Heart right ventricle (tissue), 16 donors: ENCODE measurements at regions of chr16 and their contacts with region 1.

Region 1: DNA sequence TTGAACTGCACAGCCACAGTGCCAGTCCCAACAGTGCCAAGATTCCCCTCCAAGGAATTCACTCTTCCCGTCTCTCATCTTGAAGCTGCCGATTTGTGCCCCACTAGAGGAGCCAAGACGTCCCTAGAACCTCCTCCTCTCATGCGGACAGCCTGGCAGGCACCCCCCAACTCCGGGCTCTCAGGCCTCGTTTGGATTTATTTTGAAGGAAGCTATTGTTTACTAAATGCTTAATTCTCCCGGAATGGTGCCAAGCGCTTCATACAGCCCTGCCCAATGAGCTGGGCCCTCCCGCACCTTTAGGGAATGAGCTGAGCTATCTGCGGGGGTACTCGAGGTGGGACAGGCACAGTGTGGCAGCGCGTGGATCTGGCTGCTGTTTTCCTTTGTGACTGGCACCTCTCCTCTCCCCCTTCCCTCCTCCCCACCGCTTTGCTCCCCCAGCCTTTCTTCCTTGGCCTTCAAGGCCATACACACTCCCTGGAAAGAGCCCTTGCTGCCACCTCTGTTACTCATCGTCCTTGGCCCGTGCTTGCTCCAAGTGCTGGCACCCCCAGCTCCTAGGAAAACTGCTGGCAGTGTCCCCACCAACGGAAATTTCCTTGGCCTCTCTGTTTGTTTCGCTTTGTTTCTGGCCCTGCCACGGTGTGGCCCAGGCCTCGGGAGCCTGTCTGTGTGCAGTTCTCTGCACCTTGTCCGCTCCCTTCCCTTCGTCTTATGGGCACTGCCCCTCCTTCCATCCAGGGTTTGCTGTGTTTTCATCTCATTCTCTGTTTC is 49.9 kb upstream of the CDR2 start:
- DNase-seq: peak in 1 of 2 donors; percentile 25
- ATAC-seq: peak; percentile 25 to 44 (median 34)
- H3K4me3 ChIP-seq: peak overlapping the region in 7 of 10 donors; percentile 2 to 34 (median 31)
- H3K27ac ChIP-seq: peak overlapping the region; percentile 2 to 79 (median 70)
- H3K4me1 ChIP-seq: peaks cover 0 to 19% (median 5%) of the 10 kb centered on the region in 9 donors
- H3K27me3 ChIP-seq: no peaks in the 10 kb centered on the region
- CTCF ChIP-seq: no peak

Region 2: GRCh38 chr16:21952793-21953540 is 471.4 kb before region 1 on chr16 and contains the start of gene UQCRC2:
- intact Hi-C with region 1: no loop called
- DNase-seq: peak; percentile 85 to 93
- ATAC-seq: peak; percentile 95 to 98 (median 97)
- H3K4me3 ChIP-seq: peak within 1 kb of the TSS; percentile 78 to 98 (median 88)
- H3K27ac ChIP-seq: peak within 1 kb of the TSS; percentile 86 to 99 (median 96)
- H3K4me1 ChIP-seq: peaks cover 3 to 70% (median 50%) of the 10 kb centered on the region in 9 donors
- H3K27me3 ChIP-seq: no peaks in the 10 kb centered on the region
- CTCF ChIP-seq: no peak
- total RNA-seq, gene UQCRC2: 648 to 1,183 (median 997) TPM

Region 3: GRCh38 chr16:22374311-22375116 is 49.8 kb before region 1 on chr16 and contains the start of gene CDR2:
- intact Hi-C with region 1: loop called in 1 of 10 experiments (anchors 10 kb)
- DNase-seq: peak; percentile 98 to 99
- ATAC-seq: peak; percentile 96 to 99 (median 97)
- H3K4me3 ChIP-seq: peak within 1 kb of the TSS; percentile 83 to 97 (median 95)
- H3K27ac ChIP-seq: peak within 1 kb of the TSS; percentile 64 to 91 (median 86)
- H3K4me1 ChIP-seq: peaks cover 6 to 54% (median 34%) of the 10 kb centered on the region in 9 donors
- H3K27me3 ChIP-seq: no peaks in the 10 kb centered on the region
- CTCF ChIP-seq: no peak
- total RNA-seq, gene CDR2: 4.2 to 8.1 (median 6.6) TPM